GM13976 (cell line): ENCODE measurements at regions of chr2 and their contacts with region 1.

Region 1: DNA sequence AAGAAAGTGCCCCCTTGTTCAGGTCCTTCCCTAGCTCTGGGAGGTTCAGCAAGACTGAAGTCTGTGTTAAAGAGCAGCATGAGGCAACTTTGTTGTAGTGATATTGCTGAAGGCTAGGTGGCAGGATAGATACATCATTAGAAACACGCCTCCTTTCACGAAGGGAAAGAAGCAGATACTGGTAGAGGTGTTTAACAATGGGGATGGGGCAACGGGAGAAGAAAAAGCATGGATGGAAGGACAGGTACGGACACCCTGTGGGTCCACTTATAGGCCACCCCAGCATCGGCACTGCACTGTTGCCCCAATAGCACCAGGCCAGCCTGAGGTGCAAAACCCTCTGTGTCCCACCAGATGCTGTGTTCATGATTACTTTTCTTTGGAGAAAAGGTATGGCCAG is 3.5 kb upstream of the IGFBP5 start:
- DNase-seq: peak; percentile 58
- CTCF ChIP-seq: peak; percentile 70

Region 2: GRCh38 chr2:217510771-217511291 is 811.9 kb after region 1 on chr2:
- in situ Hi-C with region 1: loop called (anchors 10 kb)
- DNase-seq: peak; percentile 75
- CTCF ChIP-seq: peak; percentile 56

Region 3: GRCh38 chr2:217713395-217714286 is 1014.7 kb after region 1 on chr2:
- in situ Hi-C with region 1: loop called (anchors 10 kb)
- DNase-seq: peak; percentile 79
- CTCF ChIP-seq: peak; percentile 88